ENCODE measurements at regions of chr3 and their contacts with region 1.

Region 1: DNA sequence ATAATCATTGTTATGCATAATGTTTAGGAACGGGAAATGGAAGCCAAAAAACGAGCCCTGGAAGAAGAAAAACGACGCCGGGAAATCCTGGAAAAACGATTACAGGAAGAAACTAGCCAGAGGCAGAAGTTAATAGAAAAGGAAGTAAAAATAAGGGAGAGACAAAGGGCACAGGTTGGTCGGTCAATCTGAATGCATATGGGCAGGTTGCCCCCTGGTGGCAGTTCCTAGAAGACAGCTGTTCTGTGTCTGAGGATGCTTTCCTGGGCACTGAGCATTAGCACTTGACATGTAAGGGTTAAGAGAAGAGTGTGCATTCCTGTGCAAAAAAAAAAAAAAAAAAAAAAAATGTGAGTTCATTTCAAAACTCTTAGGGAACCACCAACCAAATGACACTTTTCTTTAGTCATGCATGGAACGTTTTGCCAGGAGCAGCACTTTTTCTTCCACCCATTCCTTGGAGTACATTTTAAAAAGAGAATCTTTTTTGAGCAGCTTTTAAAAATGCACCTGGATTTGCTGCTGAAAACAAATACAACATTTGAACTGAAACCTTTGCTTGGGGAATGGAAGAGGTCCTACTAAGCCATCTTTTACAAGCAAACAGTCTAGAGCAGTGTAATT is 11.1 kb upstream of the ABHD10 start:
- DNase-seq: no peak
- ATAC-seq: peak; percentile 99
- H3K4me3 ChIP-seq: no peak overlapping the region
- H3K27ac ChIP-seq: no peak overlapping the region
- H3K4me1 ChIP-seq: no peaks in the 10 kb centered on the region
- H3K27me3 ChIP-seq: no peaks in the 10 kb centered on the region
- CTCF ChIP-seq: peak; percentile 78 to 87 (median 85)
- EP300 ChIP-seq: no peak
- POLR2A ChIP-seq: no peak
- RAD21 ChIP-seq: peak; percentile 90

Region 2: GRCh38 chr3:111650378-111651275 is 317.1 kb before region 1 on chr3:
- CTCF ChIA-PET with region 1: no interaction called
- POLR2A ChIA-PET with region 1: no interaction called
- RAD21 ChIA-PET with region 1: no interaction called
- SMC1A ChIA-PET with region 1: no interaction called
- in situ Hi-C with region 1: no loop called
- intact Hi-C with region 1: no loop called
- DNase-seq: no peak
- ATAC-seq: peak; percentile 48
- H3K4me3 ChIP-seq: no peak overlapping the region
- H3K27ac ChIP-seq: no peak overlapping the region
- H3K4me1 ChIP-seq: no peaks in the 10 kb centered on the region
- H3K27me3 ChIP-seq: 0 out of 4 replicates have a peak, but pooled peaks cover 0 to 4% of the 10 kb centered on the region in 2 experiments
- CTCF ChIP-seq: no peak
- EP300 ChIP-seq: no peak
- POLR2A ChIP-seq: no peak
- RAD21 ChIP-seq: no peak

Region 3: GRCh38 chr3:111668912-111669488 is 298.8 kb before region 1 on chr3:
- CTCF ChIA-PET with region 1: interaction called, 88 read pairs
- POLR2A ChIA-PET with region 1: no interaction called
- RAD21 ChIA-PET with region 1: interaction called, 37 read pairs
- SMC1A ChIA-PET with region 1: interaction called, 55 read pairs
- in situ Hi-C with region 1: loop called (anchors 5 kb)
- intact Hi-C with region 1: loop called (anchors 1 kb)
- DNase-seq: no peak
- ATAC-seq: peak; percentile 88
- H3K4me3 ChIP-seq: no peak overlapping the region
- H3K27ac ChIP-seq: no peak overlapping the region
- H3K4me1 ChIP-seq: peaks cover 8% of the 10 kb centered on the region; the same call in 1 of the 2 replicates
- H3K27me3 ChIP-seq: no peaks in the 10 kb centered on the region
- CTCF ChIP-seq: peak; percentile 69 to 79 (median 76)
- EP300 ChIP-seq: no peak
- POLR2A ChIP-seq: no peak
- RAD21 ChIP-seq: peak; percentile 84

Region 4: GRCh38 chr3:111729087-111729846 is 238.5 kb before region 1 on chr3:
- CTCF ChIA-PET with region 1: interaction called, 11 read pairs
- POLR2A ChIA-PET with region 1: no interaction called
- RAD21 ChIA-PET with region 1: interaction called, 9 read pairs
- SMC1A ChIA-PET with region 1: interaction called, 424 read pairs
- in situ Hi-C with region 1: no loop called
- intact Hi-C with region 1: no loop called
- DNase-seq: no peak
- ATAC-seq: no peak
- H3K4me3 ChIP-seq: no peak overlapping the region
- H3K27ac ChIP-seq: no peak overlapping the region
- H3K4me1 ChIP-seq: no peaks in the 10 kb centered on the region
- H3K27me3 ChIP-seq: no peaks in the 10 kb centered on the region
- CTCF ChIP-seq: no peak
- EP300 ChIP-seq: no peak
- POLR2A ChIP-seq: no peak
- RAD21 ChIP-seq: no peak

Region 5: DNA sequence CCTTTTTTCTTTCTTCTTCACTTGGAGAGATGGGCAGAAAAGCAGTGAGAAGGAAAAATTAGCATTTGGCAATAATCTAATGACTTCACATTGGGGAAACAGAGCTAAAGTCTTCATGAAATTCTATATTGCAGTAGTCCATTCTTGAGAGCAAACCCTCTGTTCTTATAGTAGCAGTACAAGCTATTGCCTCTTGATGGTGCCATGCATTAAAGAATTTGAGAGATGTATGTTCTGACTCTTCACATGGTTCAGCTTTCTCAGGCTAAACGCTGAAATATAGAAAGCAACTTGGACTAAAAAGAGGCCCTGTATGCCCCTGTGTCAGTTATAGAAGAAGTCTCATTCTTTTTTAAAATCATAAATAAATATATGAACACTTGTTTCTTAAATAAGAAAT is 72.7 kb before region 1 on chr3:
- CTCF ChIA-PET with region 1: interaction called, 72 read pairs
- POLR2A ChIA-PET with region 1: interaction called, 3 read pairs
- RAD21 ChIA-PET with region 1: interaction called, 18 read pairs
- SMC1A ChIA-PET with region 1: interaction called, 37 read pairs
- in situ Hi-C with region 1: no loop called
- intact Hi-C with region 1: loop called (anchors 1 kb)
- DNase-seq: no peak
- ATAC-seq: peak; percentile 71
- H3K4me3 ChIP-seq: no peak overlapping the region
- H3K27ac ChIP-seq: no peak overlapping the region
- H3K4me1 ChIP-seq: no peaks in the 10 kb centered on the region
- H3K27me3 ChIP-seq: peaks cover 0 to 1% of the 10 kb centered on the region in 2 experiments; a peak in 1 of 4 replicates
- CTCF ChIP-seq: peak; percentile 11 to 37 (median 26); a peak in 2 of 6 replicates
- EP300 ChIP-seq: no peak
- POLR2A ChIP-seq: no peak
- RAD21 ChIP-seq: peak; percentile 36; the same call in 1 of the 2 replicates

Region 6: DNA sequence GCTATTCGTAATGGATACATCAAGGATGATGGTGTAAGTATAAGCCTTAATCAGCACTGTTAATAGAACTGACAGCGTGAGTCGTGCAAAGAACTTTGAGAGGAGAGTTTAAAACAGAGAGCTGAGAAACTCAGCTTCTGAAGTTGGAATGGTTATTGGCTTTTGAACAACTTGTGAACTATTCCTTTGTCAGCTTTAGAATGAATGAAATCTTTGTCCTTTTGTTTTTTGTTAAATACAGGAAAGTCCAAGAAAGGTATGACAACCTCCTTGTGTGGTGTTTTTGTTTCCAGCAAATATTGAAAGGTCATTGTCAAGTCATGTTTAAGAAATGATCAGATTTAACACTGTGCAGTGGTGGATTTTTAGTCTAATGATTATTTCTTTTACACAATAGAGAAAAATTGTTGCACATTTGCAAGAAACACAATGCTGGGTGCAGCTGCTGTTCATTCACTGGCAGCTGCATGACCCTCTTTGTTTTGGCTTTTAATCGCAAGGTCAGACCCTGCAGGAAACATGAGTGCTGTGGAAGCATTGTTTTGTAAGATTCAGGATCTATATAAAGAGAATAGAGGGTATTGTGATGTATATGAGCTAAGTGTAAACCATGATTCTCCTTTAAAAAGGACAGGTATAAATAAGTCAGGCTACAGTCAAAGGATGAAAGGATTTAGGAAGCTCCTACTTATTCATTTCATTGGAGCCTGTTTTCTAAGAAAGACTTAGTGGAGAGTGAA is 10.6 kb before region 1 on chr3:
- CTCF ChIA-PET with region 1: interaction called, 29 read pairs
- POLR2A ChIA-PET with region 1: no interaction called
- RAD21 ChIA-PET with region 1: interaction called, 9 read pairs
- SMC1A ChIA-PET with region 1: interaction called, 8 read pairs
- in situ Hi-C with region 1: no loop called
- intact Hi-C with region 1: no loop called
- DNase-seq: no peak
- ATAC-seq: no peak
- H3K4me3 ChIP-seq: no peak overlapping the region
- H3K27ac ChIP-seq: no peak overlapping the region
- H3K4me1 ChIP-seq: no peaks in the 10 kb centered on the region
- H3K27me3 ChIP-seq: peaks cover 0 to 4% of the 10 kb centered on the region in 2 experiments; a peak in 1 of 4 replicates
- CTCF ChIP-seq: no peak
- EP300 ChIP-seq: no peak
- POLR2A ChIP-seq: no peak
- RAD21 ChIP-seq: no peak

Region 7: DNA sequence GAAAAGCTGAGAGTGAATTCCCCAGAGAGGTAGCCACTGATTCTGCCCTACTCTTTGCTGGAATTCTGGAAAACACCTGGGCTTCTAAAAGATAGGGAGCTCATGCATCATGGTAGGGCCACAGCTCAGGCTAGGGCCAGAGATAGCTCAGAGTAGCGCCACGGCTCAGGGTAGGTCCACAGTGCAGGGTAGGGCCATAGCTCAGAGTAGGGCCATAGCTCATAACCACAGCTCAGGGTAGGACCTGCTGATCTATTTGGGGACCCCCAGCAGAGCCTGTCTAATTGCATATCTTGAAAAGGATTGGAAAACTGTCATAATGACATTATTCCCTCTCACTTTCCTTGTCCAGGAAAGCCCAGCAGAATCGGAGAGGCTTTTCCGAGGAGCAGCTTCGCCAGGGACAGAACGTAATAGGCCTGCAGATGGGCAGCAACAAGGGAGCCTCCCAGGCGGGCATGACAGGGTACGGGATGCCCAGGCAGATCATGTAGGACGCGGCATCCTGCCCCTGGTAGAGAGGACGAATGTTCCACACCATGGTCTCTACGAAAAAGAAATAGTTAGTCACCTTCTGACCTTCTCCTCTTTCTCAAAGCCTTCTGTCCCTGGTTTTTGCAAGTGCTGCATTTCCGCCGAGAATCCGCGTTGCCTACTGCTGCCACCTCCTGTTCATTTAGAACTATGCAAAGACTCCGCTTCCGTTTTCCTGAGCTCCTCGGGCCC is 45.5 kb after region 1 on chr3:
- CTCF ChIA-PET with region 1: interaction called, 90 read pairs
- POLR2A ChIA-PET with region 1: no interaction called
- RAD21 ChIA-PET with region 1: interaction called, 53 read pairs
- SMC1A ChIA-PET with region 1: interaction called, 70 read pairs
- in situ Hi-C with region 1: no loop called
- intact Hi-C with region 1: no loop called
- DNase-seq: no peak
- ATAC-seq: peak; percentile 94
- H3K4me3 ChIP-seq: no peak overlapping the region
- H3K27ac ChIP-seq: no peak overlapping the region
- H3K4me1 ChIP-seq: no peaks in the 10 kb centered on the region
- H3K27me3 ChIP-seq: no peaks in the 10 kb centered on the region; a peak in 1 of 4 replicates
- CTCF ChIP-seq: peak; percentile 70 to 80 (median 72)
- EP300 ChIP-seq: no peak
- POLR2A ChIP-seq: no peak
- RAD21 ChIP-seq: peak; percentile 81

Measured in GM12878 (cell line).